GM23248 (cell line): ENCODE measurements at regions of chr9 and their contacts with region 1.

Region 1: DNA sequence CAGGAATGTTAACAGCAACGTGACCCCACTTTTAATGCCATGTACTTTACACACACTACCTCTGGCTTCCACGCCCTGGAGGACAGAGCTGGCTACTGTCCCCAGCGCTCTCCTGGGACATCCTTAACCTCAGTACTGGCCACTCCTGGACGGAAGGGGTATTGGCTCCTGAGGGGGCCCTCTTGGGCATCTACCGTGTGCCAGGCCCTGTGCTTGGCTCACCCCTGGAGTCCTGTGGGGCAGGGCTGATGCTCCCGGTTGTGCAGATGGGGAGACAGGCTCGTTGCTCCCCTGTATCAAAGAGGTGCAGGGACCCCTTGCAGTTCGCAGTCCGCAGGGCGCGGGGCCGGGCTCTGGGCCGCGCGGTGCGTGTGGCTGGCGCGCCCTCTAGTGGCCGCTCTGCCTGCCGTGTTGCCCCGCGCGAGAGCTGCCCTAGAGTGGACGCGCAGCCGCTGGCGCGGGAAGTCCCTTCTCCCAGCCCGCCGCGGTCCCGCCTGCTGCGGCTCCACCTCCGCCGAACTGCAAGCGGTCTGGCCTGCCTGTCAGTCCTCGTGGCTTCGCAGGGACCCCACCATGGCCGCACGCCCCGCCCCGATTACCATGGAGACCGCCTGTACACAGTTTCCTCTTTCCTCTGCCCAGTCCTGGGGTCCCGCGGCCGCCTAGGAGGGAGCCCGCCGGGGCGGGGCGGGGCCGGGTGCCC is at the start of gene WDR38:
- DNase-seq: peak; percentile 87
- H3K4me3 ChIP-seq: peak within 1 kb of the TSS; percentile 69
- H3K27ac ChIP-seq: no peak within 1 kb of the TSS
- H3K4me1 ChIP-seq: no peaks in the 10 kb centered on the region
- H3K27me3 ChIP-seq: no peaks in the 10 kb centered on the region
- total RNA-seq, gene WDR38: not detected in 2 replicates

Region 2: DNA sequence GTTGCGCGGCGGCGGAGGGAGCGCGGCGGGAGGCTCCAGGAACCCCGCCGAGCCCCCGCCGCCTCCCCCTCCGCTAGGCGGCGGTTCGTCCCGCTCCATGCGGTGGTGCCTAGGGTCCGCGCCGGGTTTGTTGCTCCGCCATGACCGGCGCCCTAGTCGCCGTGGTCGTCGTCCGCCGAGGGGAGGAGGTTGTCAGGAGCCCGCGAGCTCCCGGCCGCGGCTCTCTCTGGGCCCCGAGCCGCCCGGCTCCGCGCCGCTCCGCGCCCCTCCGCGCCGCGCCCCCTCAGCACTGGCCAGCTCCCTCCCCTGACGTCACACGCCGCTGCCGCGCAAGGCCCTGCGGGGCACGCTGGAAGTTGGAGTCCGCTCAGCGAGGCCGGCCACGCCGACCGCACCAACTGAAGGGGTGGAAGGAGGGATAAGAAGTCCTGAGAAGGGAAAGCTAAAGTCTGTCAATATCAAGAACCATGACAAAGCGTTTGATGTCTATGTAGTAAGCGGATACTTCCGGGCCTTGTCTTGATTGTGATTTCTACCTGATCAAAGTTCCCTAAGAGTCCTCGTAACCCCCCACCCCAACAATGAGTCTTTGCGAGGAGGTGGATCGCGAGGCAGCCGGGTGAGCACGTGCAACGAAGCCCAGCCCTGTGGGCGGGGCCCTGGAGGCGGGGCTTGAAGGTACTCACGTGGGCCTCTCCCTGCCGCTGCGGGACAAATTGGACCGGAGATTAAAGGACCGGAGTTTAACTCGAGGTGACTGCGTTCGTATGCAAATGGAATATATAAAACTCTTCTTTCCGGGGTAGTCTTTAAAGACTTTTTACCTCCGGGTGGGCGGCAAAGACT is 81.7 kb before region 1 on chr9 and contains the start of gene NR6A1:
- in situ Hi-C with region 1: loop called (anchors 5 kb)
- DNase-seq: peak; percentile 98
- H3K4me3 ChIP-seq: peak within 1 kb of the TSS; percentile 79
- H3K27ac ChIP-seq: peak within 1 kb of the TSS; percentile 43
- H3K4me1 ChIP-seq: no peaks in the 10 kb centered on the region
- H3K27me3 ChIP-seq: peaks cover 42% of the 10 kb centered on the region
- total RNA-seq, gene NR6A1: not detected in 2 replicates